ENCODE measurements at regions of chr20 and their contacts with region 1.

Region 1: GRCh38 chr20:9392892-9393857 is 121.2 kb upstream of the LAMP5 start:
- DNase-seq: peak; percentile 81
- H3K4me3 ChIP-seq: no peak overlapping the region
- H3K27ac ChIP-seq: no peak overlapping the region
- H3K4me1 ChIP-seq: no peaks in the 10 kb centered on the region
- H3K27me3 ChIP-seq: no peaks in the 10 kb centered on the region
- CTCF ChIP-seq: peak; percentile 79

Region 2: DNA sequence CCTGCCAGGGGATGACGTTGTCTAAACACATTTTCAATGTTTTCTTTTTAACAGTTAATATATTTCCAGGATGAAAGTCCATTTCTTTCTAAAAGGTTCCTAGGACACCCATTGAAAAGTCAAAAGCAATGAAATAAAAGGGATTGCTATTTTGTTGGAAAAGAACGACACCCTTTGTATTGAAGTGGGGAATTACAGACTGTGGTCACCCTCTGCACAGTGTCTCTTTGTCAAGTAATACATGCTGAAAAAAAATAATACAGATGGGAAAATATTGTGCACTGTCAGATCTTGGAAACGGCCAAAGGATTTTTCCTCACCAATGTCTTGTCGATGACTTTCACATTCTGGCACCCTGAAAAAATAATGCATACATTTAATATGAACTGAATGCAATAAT is 1509.9 kb before region 1 on chr20:
- CTCF ChIA-PET with region 1: no interaction called
- POLR2A ChIA-PET with region 1: interaction called, 13 read pairs
- intact Hi-C with region 1: no loop called
- DNase-seq: no peak
- H3K4me3 ChIP-seq: no peak overlapping the region
- H3K27ac ChIP-seq: no peak overlapping the region
- H3K4me1 ChIP-seq: no peaks in the 10 kb centered on the region
- H3K27me3 ChIP-seq: peaks cover 34% of the 10 kb centered on the region
- CTCF ChIP-seq: no peak

Region 3: GRCh38 chr20:8749986-8750385 is 643.2 kb before region 1 on chr20:
- CTCF ChIA-PET with region 1: interaction called, 3 read pairs
- POLR2A ChIA-PET with region 1: no interaction called
- intact Hi-C with region 1: loop called (anchors 2 kb)
- DNase-seq: no peak
- H3K4me3 ChIP-seq: no peak overlapping the region
- H3K27ac ChIP-seq: no peak overlapping the region
- H3K4me1 ChIP-seq: no peaks in the 10 kb centered on the region
- H3K27me3 ChIP-seq: no peaks in the 10 kb centered on the region
- CTCF ChIP-seq: no peak

Region 4: DNA sequence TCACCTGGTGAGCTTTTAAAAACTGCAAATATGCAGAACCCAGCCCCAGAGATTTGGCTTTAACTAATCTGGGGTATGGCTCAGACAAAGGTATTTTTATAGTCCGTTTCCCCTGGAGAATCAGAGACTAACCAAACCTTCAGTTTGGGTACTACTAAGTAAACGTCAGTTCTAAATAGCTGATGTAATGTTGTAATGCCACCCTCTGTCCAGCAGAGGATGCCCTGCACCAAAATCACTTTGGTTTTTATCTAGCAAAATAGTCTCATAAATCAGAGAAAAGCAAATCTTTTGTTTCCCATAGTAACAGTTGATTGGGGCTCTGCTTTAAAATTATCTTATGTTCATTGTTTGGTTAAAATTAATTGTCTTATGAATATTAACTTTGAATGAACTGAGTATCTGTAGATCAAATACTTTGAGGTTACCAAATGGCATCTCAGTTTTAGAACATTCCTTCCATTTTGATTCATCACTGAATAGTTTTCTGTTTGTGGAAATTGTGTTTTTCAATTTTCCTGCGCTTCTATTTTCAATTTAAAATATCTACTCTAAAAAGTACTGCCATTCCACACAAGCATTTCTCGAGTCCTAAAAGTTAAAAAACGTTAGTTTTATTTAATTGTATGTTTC is 602.6 kb before region 1 on chr20:
- CTCF ChIA-PET with region 1: interaction called, 15 read pairs
- POLR2A ChIA-PET with region 1: no interaction called
- intact Hi-C with region 1: loop called (anchors 2 kb)
- DNase-seq: peak; percentile 62
- H3K4me3 ChIP-seq: no peak overlapping the region
- H3K27ac ChIP-seq: no peak overlapping the region
- H3K4me1 ChIP-seq: no peaks in the 10 kb centered on the region
- H3K27me3 ChIP-seq: no peaks in the 10 kb centered on the region
- CTCF ChIP-seq: peak; percentile 92

Region 5: GRCh38 chr20:9442858-9443257 is 49.7 kb after region 1 on chr20:
- CTCF ChIA-PET with region 1: no interaction called
- POLR2A ChIA-PET with region 1: no interaction called
- intact Hi-C with region 1: no loop called
- DNase-seq: no peak
- H3K4me3 ChIP-seq: no peak overlapping the region
- H3K27ac ChIP-seq: no peak overlapping the region
- H3K4me1 ChIP-seq: no peaks in the 10 kb centered on the region
- H3K27me3 ChIP-seq: no peaks in the 10 kb centered on the region
- CTCF ChIP-seq: no peak

Region 6: DNA sequence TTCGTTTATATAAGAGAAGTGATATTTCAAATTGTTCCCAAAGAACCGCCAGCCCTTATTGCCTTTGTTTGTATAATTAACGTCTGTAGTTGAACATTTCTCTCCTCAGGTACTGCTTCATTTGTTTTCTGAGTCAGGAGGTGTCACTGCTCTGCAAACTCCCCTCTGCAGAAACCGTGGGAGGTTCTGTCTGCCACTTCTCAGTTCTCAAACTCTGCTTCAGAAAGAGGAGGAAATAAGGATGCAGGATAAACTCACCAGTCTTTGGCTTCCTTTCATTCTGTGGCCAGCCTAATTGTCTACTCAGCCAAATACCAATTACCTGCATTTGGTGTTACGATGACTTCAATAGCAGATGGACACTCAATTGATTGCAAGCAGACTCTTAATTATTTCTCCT is 295.9 kb after region 1 on chr20:
- CTCF ChIA-PET with region 1: no interaction called
- POLR2A ChIA-PET with region 1: no interaction called
- intact Hi-C with region 1: no loop called
- DNase-seq: no peak
- H3K4me3 ChIP-seq: no peak overlapping the region
- H3K27ac ChIP-seq: no peak overlapping the region
- H3K4me1 ChIP-seq: no peaks in the 10 kb centered on the region
- H3K27me3 ChIP-seq: peaks cover 29% of the 10 kb centered on the region
- CTCF ChIP-seq: no peak

Region 7: GRCh38 chr20:9945408-9945807 is 552.2 kb after region 1 on chr20:
- CTCF ChIA-PET with region 1: no interaction called
- POLR2A ChIA-PET with region 1: no interaction called
- intact Hi-C with region 1: no loop called
- DNase-seq: peak; percentile 39
- H3K4me3 ChIP-seq: no peak overlapping the region
- H3K27ac ChIP-seq: no peak overlapping the region
- H3K4me1 ChIP-seq: no peaks in the 10 kb centered on the region
- H3K27me3 ChIP-seq: no peaks in the 10 kb centered on the region
- CTCF ChIP-seq: no peak

Measured in A673 (cell line).